ENCODE measurements at regions of chr13 and their contacts with region 1.

Region 1: DNA sequence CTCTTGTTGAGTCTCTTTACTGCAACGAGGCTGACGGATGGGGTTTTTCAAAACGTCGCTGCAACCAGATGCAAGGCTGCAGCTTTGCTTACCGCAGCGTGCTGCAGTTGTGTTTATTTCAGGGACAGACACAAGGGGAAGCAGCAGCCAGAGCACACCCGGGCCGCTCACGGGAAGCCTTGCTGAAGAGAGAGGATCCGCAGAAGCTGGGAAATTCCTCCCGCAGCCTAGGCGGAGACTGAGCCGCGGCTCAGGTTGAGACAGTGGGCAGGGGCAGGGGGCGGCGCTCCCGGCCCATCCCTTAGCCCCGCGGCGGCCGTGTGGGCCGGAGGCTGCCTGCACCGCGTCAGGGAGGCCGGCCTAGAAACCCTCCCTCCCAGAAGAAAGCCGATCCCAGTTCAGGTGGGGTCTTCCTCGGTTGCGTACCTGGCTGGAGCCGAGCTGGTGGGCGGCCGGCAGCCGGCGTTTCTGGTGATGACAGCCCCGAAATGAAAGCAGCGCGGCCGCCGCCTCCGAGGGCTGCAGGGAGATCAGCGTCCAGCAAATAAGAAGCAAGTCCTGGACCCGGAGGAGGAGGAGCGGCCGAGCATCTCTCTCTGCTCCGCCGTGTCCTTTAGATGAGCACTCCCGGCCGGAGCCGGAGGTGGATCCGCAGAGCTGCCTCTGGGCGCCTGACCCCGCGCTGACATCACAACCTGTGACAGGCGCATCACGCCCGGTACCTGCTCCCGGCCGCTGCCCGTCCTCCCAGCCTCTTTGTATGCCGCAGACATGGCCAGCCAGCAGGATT is at the start of gene FRY:
- DNase-seq: peak; percentile 47 to 92 (median 75)
- H3K4me3 ChIP-seq: peak within 1 kb of the TSS; percentile 54 to 95 (median 80)
- H3K27ac ChIP-seq: peak within 1 kb of the TSS; percentile 35 to 96 (median 89)
- H3K27me3 ChIP-seq: no peaks in the 10 kb centered on the region
- CTCF ChIP-seq: peak in 6 of 56 donors; percentile 4 to 14 (median 6)
- total RNA-seq, gene FRY: 56.2 to 155 (median 103) TPM

Region 2: GRCh38 chr13:31818236-31818635 is 213.0 kb before region 1 on chr13:
- intact Hi-C with region 1: no loop called
- DNase-seq: no peak
- H3K4me3 ChIP-seq: no peak overlapping the region
- H3K27ac ChIP-seq: no peak overlapping the region
- H3K27me3 ChIP-seq: no peaks in the 10 kb centered on the region
- CTCF ChIP-seq: no peak

Region 3: DNA sequence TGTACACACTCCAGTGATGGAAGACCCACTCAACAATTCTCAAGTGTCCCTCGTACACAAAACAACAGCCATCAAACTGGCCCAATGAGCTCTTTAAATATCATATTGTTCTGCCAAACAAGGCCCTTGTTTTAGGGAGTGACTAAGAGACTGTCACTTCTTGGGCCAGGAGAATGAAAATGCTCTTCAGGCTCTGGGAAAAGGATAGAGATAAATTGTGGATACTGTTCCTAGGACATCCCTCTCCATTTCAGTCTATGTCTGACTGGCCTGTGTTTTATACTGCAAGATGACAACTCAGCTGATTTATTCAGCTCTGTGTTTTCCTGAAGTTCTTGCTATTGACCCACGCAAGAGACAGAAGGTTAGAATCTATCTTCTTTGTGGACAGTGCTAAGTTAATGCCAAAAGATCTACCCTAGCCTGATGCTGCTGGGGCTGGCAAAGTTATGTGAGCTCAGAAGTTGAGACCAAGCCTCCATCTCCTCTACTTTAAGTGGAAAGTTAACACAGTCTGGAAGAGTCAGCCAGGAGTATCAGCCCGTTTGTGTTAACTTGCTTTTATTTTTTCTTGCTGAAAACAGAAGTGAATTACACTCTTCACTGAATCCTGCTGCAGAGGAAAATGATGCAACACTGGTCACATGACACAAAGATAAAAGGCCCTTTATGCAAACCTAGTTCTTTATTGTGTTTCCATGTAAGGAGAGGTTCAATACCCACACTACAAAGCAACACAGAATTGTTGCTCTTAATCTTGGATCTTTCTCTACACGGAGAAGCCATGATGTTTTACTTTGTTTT is 15.0 kb after region 1 on chr13:
- intact Hi-C with region 1: loop called in 1 of 2 experiments (anchors 1 kb)
- DNase-seq: no peak
- H3K4me3 ChIP-seq: peak overlapping the region in 46 of 59 donors; percentile 1 to 58 (median 30)
- H3K27ac ChIP-seq: peak overlapping the region in 58 of 59 donors; percentile 34 to 95 (median 84)
- H3K27me3 ChIP-seq: peaks cover 0 to 3% (median 0%) of the 10 kb centered on the region in 45 donors
- CTCF ChIP-seq: no peak

Region 4: DNA sequence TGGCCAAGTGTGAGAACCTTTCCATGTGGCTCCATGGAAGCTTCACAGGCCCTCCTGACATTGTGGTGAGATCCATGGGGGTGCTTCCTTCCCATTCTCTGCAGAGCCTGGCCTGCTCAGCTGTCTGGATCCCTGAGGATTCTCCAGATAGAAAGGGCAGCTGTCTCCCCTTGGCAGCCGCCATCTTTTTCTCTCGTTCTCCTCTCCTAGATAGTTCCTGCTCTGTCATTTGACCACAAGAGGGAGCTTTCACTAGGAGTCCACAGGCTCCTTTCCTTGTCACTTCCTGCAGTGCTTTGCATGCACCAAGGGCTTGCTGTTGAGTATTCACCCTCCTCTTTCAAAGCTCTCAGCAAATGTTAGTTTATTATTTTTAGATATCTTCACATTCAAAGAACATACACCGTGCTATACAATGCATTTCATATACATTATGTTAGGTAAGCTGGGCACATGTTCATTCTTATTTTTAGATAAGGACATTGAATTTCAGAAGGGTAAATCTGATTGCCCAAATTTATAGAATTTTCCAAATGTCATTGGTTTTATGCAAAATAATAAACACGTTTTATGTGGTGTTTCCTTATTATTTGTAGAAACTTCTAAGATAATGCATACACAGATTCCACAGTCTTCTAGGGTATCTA is 133.5 kb after region 1 on chr13:
- intact Hi-C with region 1: loop called in 1 of 2 experiments (anchors 5 kb)
- DNase-seq: peak in 2 of 10 donors; percentile 19 to 22
- H3K4me3 ChIP-seq: no peak overlapping the region
- H3K27ac ChIP-seq: peak overlapping the region in 33 of 59 donors; percentile 0 to 87 (median 35)
- H3K27me3 ChIP-seq: no peaks in the 10 kb centered on the region
- CTCF ChIP-seq: peak in 54 of 56 donors; percentile 21 to 70 (median 56)

Region 5: DNA sequence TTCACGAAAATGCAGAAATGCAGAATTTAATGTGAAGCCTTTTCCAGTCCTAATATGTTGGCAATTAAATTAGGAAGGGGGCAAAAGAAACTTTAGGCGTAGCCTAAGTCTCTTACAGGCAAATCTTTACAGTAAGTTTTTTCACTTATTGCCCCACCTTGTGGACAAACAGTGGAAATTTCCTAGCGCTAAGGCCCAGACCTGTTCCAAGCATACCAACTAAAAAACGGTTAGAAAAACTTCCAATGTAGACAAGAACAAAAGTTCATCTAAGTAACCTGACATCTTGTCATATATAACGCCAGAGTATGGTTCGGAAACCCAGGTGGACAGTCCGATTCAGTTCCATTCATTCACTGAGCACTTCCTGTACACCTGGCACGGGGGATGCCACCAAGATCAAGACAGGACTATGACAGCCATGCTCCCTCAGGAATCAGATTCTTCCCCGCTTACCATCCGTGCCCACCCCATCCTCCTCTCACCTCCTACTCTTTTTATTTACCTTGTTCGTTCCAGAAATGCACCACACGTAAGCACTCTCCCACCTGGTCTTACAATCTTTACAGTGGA is 279.0 kb after region 1 on chr13:
- intact Hi-C with region 1: loop called in 1 of 2 experiments (anchors 5 kb)
- DNase-seq: peak in 1 of 10 donors; percentile 15
- H3K4me3 ChIP-seq: peak overlapping the region in 26 of 59 donors; percentile 1 to 41 (median 14)
- H3K27ac ChIP-seq: no peak overlapping the region
- H3K27me3 ChIP-seq: peaks cover 0 to 4% (median 0%) of the 10 kb centered on the region in 45 donors
- CTCF ChIP-seq: peak; percentile 47 to 85 (median 77)

Measured in dorsolateral prefrontal cortex (tissue), 120 donors.